ENCODE measurements at regions of chr1 and their contacts with region 1.

Region 1: GRCh38 chr1:33055210-33056008 is 18.7 kb upstream of the AK2 start:
- DNase-seq: peak; percentile 81
- H3K4me3 ChIP-seq: no peak overlapping the region
- H3K27ac ChIP-seq: peak overlapping the region in 3 of 8 donors; percentile 22 to 56 (median 45)
- H3K4me1 ChIP-seq: peaks cover 0 to 18% (median 9%) of the 10 kb centered on the region in 6 donors
- H3K27me3 ChIP-seq: no peaks in the 10 kb centered on the region
- CTCF ChIP-seq: peak; percentile 27 to 79 (median 68)
- POLR2A ChIP-seq: no peak

Region 2: DNA sequence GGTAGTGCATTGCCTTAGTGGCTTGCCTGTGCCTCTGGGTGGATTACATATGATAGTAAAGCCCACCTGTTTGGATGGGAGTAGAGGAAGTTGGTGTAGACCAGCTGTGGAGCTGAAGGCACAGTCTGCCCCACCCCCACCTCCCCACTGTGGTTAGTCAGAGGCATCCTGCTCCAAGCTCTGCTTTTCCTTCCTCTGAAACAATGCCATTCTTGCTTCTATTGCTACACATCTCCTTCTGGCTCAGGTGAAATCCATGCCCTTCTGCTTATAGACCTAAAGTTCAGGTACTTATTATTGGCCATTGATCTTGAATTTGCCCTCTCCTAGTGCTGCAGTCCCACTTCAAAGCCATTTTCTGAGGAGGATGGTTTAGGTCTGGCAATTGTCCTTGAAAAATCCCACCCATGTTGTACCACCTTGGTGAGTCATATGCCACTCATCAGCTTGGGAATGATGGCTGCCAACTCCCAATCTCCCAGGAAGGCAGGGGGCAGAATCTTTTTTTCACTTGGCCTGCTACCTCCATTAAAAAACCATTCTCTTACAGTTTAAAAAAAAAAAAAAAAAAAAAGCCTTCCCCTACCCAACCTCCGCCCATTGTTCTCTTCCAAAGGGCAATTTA is 882.7 kb before region 1 on chr1:
- intact Hi-C with region 1: no loop called
- DNase-seq: no peak
- H3K4me3 ChIP-seq: no peak overlapping the region
- H3K27ac ChIP-seq: no peak overlapping the region
- H3K4me1 ChIP-seq: peaks cover 0 to 7% (median 0%) of the 10 kb centered on the region in 6 donors
- H3K27me3 ChIP-seq: no peaks in the 10 kb centered on the region
- CTCF ChIP-seq: no peak
- POLR2A ChIP-seq: no peak

Region 3: GRCh38 chr1:32933742-32934322 is 121.6 kb before region 1 on chr1:
- intact Hi-C with region 1: loop called (anchors 2 kb)
- DNase-seq: no peak
- H3K4me3 ChIP-seq: no peak overlapping the region
- H3K27ac ChIP-seq: peak overlapping the region in 5 of 8 donors; percentile 38 to 61 (median 49)
- H3K4me1 ChIP-seq: peaks cover 0 to 16% (median 12%) of the 10 kb centered on the region in 6 donors
- H3K27me3 ChIP-seq: no peaks in the 10 kb centered on the region
- CTCF ChIP-seq: peak in 2 of 11 experiments; percentile 10 to 22
- POLR2A ChIP-seq: no peak

Region 4: DNA sequence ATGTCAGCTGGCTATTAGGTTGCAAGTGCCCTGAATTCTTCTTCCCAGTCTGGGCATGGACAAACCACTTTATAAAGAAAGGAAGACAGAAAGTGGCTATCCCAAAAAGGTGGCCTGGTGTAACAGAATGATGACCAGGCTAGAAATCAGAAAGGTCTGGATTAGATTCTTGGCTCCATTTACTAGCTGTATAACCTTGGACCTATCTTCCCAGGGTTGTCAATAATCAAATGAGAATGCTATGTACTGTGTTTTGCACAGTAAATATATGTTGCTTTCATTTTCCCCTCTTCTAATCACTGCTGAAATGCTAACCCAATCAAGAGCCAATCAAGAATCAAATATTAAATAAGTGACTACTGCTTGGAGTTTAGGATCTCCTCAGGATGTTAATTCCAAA is 111.2 kb before region 1 on chr1:
- intact Hi-C with region 1: no loop called
- DNase-seq: no peak
- H3K4me3 ChIP-seq: no peak overlapping the region
- H3K27ac ChIP-seq: no peak overlapping the region
- H3K4me1 ChIP-seq: peaks cover 0 to 23% (median 11%) of the 10 kb centered on the region in 6 donors
- H3K27me3 ChIP-seq: no peaks in the 10 kb centered on the region
- CTCF ChIP-seq: no peak
- POLR2A ChIP-seq: no peak